ENCODE measurements at regions of chr5 and their contacts with region 1.

Region 1: DNA sequence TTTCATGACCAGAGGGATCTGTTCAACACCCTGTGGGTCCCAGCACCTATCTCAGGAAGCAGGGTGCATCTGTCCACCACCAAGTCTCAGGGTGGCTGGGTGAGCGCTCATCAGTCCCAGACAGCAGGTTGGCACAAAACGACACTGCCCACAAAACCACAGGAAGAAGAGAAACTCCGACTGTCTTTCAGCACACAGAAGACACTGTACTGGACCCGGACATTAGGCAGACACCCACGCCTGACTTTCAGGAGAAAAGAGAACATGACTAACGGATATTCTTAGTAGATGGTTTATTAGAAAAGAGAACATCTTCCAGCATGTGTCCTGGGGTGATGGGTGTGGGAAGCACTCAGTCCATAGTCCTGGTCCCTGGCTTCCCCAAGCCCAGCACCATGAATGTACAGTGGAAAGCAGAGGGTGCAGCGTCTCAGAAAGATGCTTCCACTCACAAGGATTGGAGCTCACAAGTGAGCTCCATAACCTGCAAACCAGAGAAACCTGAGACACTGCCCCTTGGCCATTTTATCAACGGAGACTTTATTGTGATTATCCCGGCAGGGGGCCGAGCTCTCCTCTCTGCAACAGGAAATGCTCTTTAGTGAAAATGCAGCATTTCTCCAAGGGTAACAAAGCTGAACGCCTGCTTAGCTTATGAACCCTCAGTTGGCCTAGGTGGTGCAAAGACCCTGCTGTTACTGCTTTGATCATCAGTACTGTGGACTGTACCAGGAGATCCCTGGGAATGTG is 35.8 kb upstream of the LCP2 start:
- DNase-seq: peak; percentile 80
- H3K4me3 Mint-ChIP-seq: peak overlapping the region; percentile 42
- H3K27ac Mint-ChIP-seq: no peak overlapping the region
- H3K4me1 Mint-ChIP-seq: peaks cover 65% of the 10 kb centered on the region
- H3K27me3 Mint-ChIP-seq: no peaks in the 10 kb centered on the region

Region 2: GRCh38 chr5:169650701-169651331 is 682.5 kb before region 1 on chr5:
- CTCF ChIA-PET with region 1: no interaction called
- intact Hi-C with region 1: loop called (anchors 2 kb)
- DNase-seq: peak; percentile 64
- H3K4me3 Mint-ChIP-seq: peak overlapping the region; percentile 49
- H3K27ac Mint-ChIP-seq: peak overlapping the region; percentile 94
- H3K4me1 Mint-ChIP-seq: peaks cover 92% of the 10 kb centered on the region
- H3K27me3 Mint-ChIP-seq: no peaks in the 10 kb centered on the region

Region 3: GRCh38 chr5:170225326-170226128 is 107.8 kb before region 1 on chr5:
- CTCF ChIA-PET with region 1: interaction called, 165 read pairs
- intact Hi-C with region 1: no loop called
- DNase-seq: peak; percentile 91
- H3K4me3 Mint-ChIP-seq: no peak overlapping the region
- H3K27ac Mint-ChIP-seq: no peak overlapping the region
- H3K4me1 Mint-ChIP-seq: peaks cover 7% of the 10 kb centered on the region
- H3K27me3 Mint-ChIP-seq: no peaks in the 10 kb centered on the region

Region 4: GRCh38 chr5:170287532-170287931 is 45.8 kb before region 1 on chr5:
- CTCF ChIA-PET with region 1: interaction called, 195 read pairs
- intact Hi-C with region 1: no loop called
- DNase-seq: no peak
- H3K4me3 Mint-ChIP-seq: no peak overlapping the region
- H3K27ac Mint-ChIP-seq: peak overlapping the region; percentile 85
- H3K4me1 Mint-ChIP-seq: peaks cover 97% of the 10 kb centered on the region
- H3K27me3 Mint-ChIP-seq: no peaks in the 10 kb centered on the region

Region 5: DNA sequence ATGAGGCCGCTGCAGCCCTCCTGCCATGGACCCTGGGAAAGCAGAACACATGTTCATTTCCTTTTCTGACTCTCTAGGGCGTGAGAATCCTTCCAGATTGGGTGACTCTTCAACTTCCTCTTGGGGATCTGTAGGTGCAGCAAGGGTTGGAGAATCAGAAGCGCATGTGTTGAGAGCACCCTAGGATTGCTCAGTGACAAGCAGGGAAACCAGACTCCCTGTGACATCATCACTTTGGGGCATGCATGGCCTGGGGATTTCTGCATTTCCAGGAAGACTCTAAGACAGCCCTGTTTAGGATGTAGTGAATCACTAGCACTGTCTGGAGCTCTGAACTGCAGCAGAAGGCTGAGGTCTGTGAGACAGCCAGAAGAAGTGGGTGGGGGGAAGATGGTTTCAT is 20.7 kb before region 1 on chr5:
- CTCF ChIA-PET with region 1: interaction called, 10 read pairs
- intact Hi-C with region 1: loop called (anchors 1 kb)
- DNase-seq: peak; percentile 90
- H3K4me3 Mint-ChIP-seq: peak overlapping the region; percentile 90
- H3K27ac Mint-ChIP-seq: peak overlapping the region; percentile 94
- H3K4me1 Mint-ChIP-seq: peaks cover 68% of the 10 kb centered on the region
- H3K27me3 Mint-ChIP-seq: no peaks in the 10 kb centered on the region

Region 6: DNA sequence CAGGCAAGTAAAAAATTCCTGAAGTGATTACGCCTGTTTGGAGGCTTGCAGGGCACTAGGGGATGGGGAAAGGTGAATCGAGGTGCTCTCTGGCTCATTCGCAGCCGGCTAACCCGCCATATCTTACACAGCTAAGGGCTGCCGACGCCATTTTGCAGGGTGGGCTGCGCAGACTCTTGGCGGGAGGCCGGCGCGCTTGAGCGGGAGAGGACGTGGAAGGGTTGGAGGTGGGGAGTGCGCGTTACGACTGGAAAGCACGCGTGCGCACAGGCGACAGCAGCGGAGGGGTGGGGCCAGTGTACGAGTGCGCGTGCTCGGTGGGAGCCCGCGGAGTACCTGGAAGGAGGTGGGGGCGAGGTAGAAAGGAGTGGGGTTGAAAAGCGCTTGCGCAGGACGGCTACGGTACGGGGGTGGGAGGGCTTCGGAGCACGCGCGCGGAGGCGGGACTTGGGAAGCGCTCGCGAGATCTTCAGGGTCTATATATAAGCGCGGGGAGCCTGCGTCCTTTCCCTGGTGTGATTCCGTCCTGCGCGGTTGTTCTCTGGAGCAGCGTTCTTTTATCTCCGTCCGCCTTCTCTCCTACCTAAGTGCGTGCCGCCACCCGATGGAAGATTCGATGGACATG is 1054.1 kb after region 1 on chr5 and contains the start of gene NPM1:
- CTCF ChIA-PET with region 1: no interaction called
- intact Hi-C with region 1: loop called (anchors 5 kb)
- DNase-seq: peak; percentile 98
- H3K4me3 Mint-ChIP-seq: peak within 1 kb of the TSS; percentile 98
- H3K27ac Mint-ChIP-seq: peak within 1 kb of the TSS; percentile 98
- H3K4me1 Mint-ChIP-seq: peaks cover 37% of the 10 kb centered on the region
- H3K27me3 Mint-ChIP-seq: no peaks in the 10 kb centered on the region
- total RNA-seq, gene NPM1: 3,194 to 3,467 TPM

Measured in activated naive CD4-positive, alpha-beta T cell treated with anti-CD3 and anti-CD28 coated beads for 36 hours (primary cell).